Naive thymus-derived CD4-positive, alpha-beta T cell (primary cell): ENCODE measurements at regions of chr3 and their contacts with region 1.

Region 1: GRCh38 chr3:53045518-53046170 is at the start of gene SFMBT1:
- DNase-seq: peak in 8 of 9 donors; percentile 53 to 75 (median 72)
- ATAC-seq: peak; percentile 71
- H3K4me3 ChIP-seq: peak within 1 kb of the TSS; percentile 77
- H3K4me3 Mint-ChIP-seq: peak within 1 kb of the TSS; percentile 92 to 100 (median 97)
- H3K27ac ChIP-seq: peak within 1 kb of the TSS; percentile 86
- H3K27ac Mint-ChIP-seq: peak within 1 kb of the TSS; percentile 91 to 100 (median 99)
- H3K4me1 ChIP-seq: peaks cover 9 to 23% of the 10 kb centered on the region in 2 donors
- H3K4me1 Mint-ChIP-seq: peaks cover 17 to 53% (median 42%) of the 10 kb centered on the region in 7 donors
- H3K27me3 ChIP-seq: no peaks in the 10 kb centered on the region
- H3K27me3 Mint-ChIP-seq: peaks cover 0 to 17% (median 0%) of the 10 kb centered on the region in 5 donors
- total RNA-seq, gene SFMBT1: 28.4 to 47.1 (median 39.0) TPM

Region 2: DNA sequence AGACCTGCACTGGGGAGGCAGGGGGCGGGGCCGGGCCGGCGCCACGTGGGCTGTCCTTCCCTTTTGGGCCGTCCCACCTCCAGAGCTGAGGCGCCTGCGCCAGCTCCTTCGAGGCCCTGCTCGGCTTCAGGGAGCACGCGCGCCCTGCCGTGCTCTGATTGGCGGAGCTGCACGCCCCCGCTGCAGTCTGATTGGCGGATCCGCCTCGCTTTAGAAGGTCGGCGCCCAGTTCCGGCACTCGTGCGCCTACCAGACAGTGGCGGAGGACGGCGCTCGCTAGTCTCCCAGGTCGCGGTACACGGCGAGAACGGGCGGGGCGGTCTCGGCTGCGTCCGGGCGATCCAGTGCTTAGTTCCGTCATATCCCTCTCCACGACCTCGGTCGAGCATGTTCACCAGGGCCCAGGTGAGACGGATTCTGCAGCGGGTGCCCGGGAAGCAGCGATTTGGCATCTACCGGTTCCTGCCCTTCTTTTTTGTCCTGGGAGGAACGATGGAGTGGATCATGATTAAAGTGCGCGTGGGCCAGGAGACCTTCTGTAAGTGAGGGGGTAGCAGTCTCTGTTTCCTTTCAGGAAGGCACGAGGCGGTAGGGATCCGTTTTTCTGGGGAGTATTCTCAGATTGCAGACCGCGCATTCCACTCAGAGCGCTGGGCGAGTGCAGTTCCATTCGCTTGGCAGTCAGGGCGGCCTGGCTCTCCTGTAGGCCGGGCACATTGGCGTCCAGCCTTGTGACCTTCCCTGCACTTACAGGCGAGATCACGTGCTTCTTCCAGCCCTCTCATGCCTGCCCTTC is 509.1 kb before region 1 on chr3 and contains the start of gene UQCC5:
- CTCF ChIA-PET with region 1: no interaction called
- POLR2A ChIA-PET with region 1: interaction called, 3 read pairs
- intact Hi-C with region 1: loop called in 1 of 2 experiments (anchors 2 kb)
- DNase-seq: peak; percentile 89 to 98 (median 97)
- ATAC-seq: peak; percentile 95
- H3K4me3 ChIP-seq: peak within 1 kb of the TSS; percentile 67
- H3K4me3 Mint-ChIP-seq: peak within 1 kb of the TSS; percentile 96 to 100 (median 99)
- H3K27ac ChIP-seq: peak within 1 kb of the TSS; percentile 85
- H3K27ac Mint-ChIP-seq: peak within 1 kb of the TSS; percentile 96 to 99 (median 98)
- H3K4me1 ChIP-seq: peaks cover 24 to 30% of the 10 kb centered on the region in 2 donors
- H3K4me1 Mint-ChIP-seq: peaks cover 29 to 66% (median 50%) of the 10 kb centered on the region in 7 donors
- H3K27me3 ChIP-seq: no peaks in the 10 kb centered on the region
- H3K27me3 Mint-ChIP-seq: no peaks in the 10 kb centered on the region
- total RNA-seq, gene UQCC5: 5.4 to 11.9 (median 10.7) TPM

Region 3: GRCh38 chr3:52742418-52743041 is 303.1 kb before region 1 on chr3:
- CTCF ChIA-PET with region 1: no interaction called
- POLR2A ChIA-PET with region 1: no interaction called
- intact Hi-C with region 1: loop called in 1 of 2 experiments (anchors 1 kb)
- DNase-seq: peak in 5 of 9 donors; percentile 18 to 35 (median 20)
- ATAC-seq: peak; percentile 50
- H3K4me3 ChIP-seq: no peak overlapping the region
- H3K4me3 Mint-ChIP-seq: no peak overlapping the region
- H3K27ac ChIP-seq: no peak overlapping the region
- H3K27ac Mint-ChIP-seq: no peak overlapping the region
- H3K4me1 ChIP-seq: no peaks in the 10 kb centered on the region
- H3K4me1 Mint-ChIP-seq: peaks cover 0 to 2% (median 0%) of the 10 kb centered on the region in 7 donors
- H3K27me3 ChIP-seq: no peaks in the 10 kb centered on the region
- H3K27me3 Mint-ChIP-seq: no peaks in the 10 kb centered on the region

Region 4: GRCh38 chr3:52897130-52898122 is 148.2 kb before region 1 on chr3 and contains the start of gene STIMATE:
- CTCF ChIA-PET with region 1: no interaction called
- POLR2A ChIA-PET with region 1: interaction called, 5 read pairs
- intact Hi-C with region 1: loop called (anchors 1 kb)
- DNase-seq: peak; percentile 77 to 89 (median 86)
- ATAC-seq: peak; percentile 97
- H3K4me3 ChIP-seq: peak within 1 kb of the TSS; percentile 85
- H3K4me3 Mint-ChIP-seq: peak within 1 kb of the TSS; percentile 90 to 99 (median 95)
- H3K27ac ChIP-seq: peak within 1 kb of the TSS; percentile 72
- H3K27ac Mint-ChIP-seq: peak within 1 kb of the TSS; percentile 44 to 97 (median 86)
- H3K4me1 ChIP-seq: peaks cover 16 to 23% of the 10 kb centered on the region in 2 donors
- H3K4me1 Mint-ChIP-seq: peaks cover 37 to 51% (median 45%) of the 10 kb centered on the region in 7 donors
- H3K27me3 ChIP-seq: no peaks in the 10 kb centered on the region
- H3K27me3 Mint-ChIP-seq: no peaks in the 10 kb centered on the region
- total RNA-seq, gene STIMATE: 21.1 to 44.9 (median 34.5) TPM

Region 5: GRCh38 chr3:52973806-52974205 is 71.8 kb before region 1 on chr3:
- CTCF ChIA-PET with region 1: no interaction called
- POLR2A ChIA-PET with region 1: interaction called, 14 read pairs
- intact Hi-C with region 1: no loop called
- DNase-seq: no peak
- ATAC-seq: no peak
- H3K4me3 ChIP-seq: no peak overlapping the region
- H3K4me3 Mint-ChIP-seq: no peak overlapping the region
- H3K27ac ChIP-seq: no peak overlapping the region
- H3K27ac Mint-ChIP-seq: peak overlapping the region in 4 of 9 donors; percentile 1 to 65 (median 34)
- H3K4me1 ChIP-seq: no peaks in the 10 kb centered on the region
- H3K4me1 Mint-ChIP-seq: peaks cover 16 to 66% (median 49%) of the 10 kb centered on the region in 7 donors
- H3K27me3 ChIP-seq: no peaks in the 10 kb centered on the region
- H3K27me3 Mint-ChIP-seq: no peaks in the 10 kb centered on the region

Region 6: GRCh38 chr3:53023068-53023823 is 22.4 kb before region 1 on chr3:
- CTCF ChIA-PET with region 1: interaction called, 5 read pairs
- POLR2A ChIA-PET with region 1: interaction called, 42 read pairs
- intact Hi-C with region 1: no loop called
- DNase-seq: no peak
- ATAC-seq: no peak
- H3K4me3 ChIP-seq: no peak overlapping the region
- H3K4me3 Mint-ChIP-seq: peak overlapping the region in 7 of 10 donors; percentile 1 to 58 (median 21)
- H3K27ac ChIP-seq: no peak overlapping the region
- H3K27ac Mint-ChIP-seq: peak overlapping the region in 5 of 9 donors; percentile 32 to 83 (median 51)
- H3K4me1 ChIP-seq: peaks cover 11 to 20% of the 10 kb centered on the region in 2 donors
- H3K4me1 Mint-ChIP-seq: peaks cover 21 to 82% (median 69%) of the 10 kb centered on the region in 7 donors
- H3K27me3 ChIP-seq: no peaks in the 10 kb centered on the region
- H3K27me3 Mint-ChIP-seq: no peaks in the 10 kb centered on the region

Region 7: GRCh38 chr3:53103397-53104296 is 58.0 kb after region 1 on chr3:
- CTCF ChIA-PET with region 1: no interaction called
- POLR2A ChIA-PET with region 1: no interaction called
- intact Hi-C with region 1: no loop called
- DNase-seq: no peak
- ATAC-seq: no peak
- H3K4me3 ChIP-seq: no peak overlapping the region
- H3K4me3 Mint-ChIP-seq: peak overlapping the region in 2 of 10 donors; percentile 79 to 82
- H3K27ac ChIP-seq: no peak overlapping the region
- H3K27ac Mint-ChIP-seq: peak overlapping the region in 6 of 9 donors; percentile 5 to 95 (median 46)
- H3K4me1 ChIP-seq: peaks cover 0 to 23% of the 10 kb centered on the region in 2 donors
- H3K4me1 Mint-ChIP-seq: peaks cover 27 to 81% (median 53%) of the 10 kb centered on the region in 7 donors
- H3K27me3 ChIP-seq: no peaks in the 10 kb centered on the region
- H3K27me3 Mint-ChIP-seq: no peaks in the 10 kb centered on the region